BJ (cell line): ENCODE measurements at regions of chr17 and their contacts with region 1.

Region 1: GRCh38 chr17:36629252-36629847 is 28.0 kb downstream of the MRM1 start:
- DNase-seq: no peak
- H3K4me3 ChIP-seq: no peak overlapping the region
- H3K27me3 ChIP-seq: peaks cover 16% of the 10 kb centered on the region
- CTCF ChIP-seq: peak; percentile 97

Region 2: GRCh38 chr17:36601303-36602029 is 27.9 kb before region 1 on chr17 and contains the start of gene MRM1:
- CTCF ChIA-PET with region 1: interaction called, 35 read pairs
- POLR2A ChIA-PET with region 1: no interaction called
- DNase-seq: peak; percentile 72
- H3K4me3 ChIP-seq: peak within 1 kb of the TSS; percentile 92
- H3K27me3 ChIP-seq: no peaks in the 10 kb centered on the region
- CTCF ChIP-seq: peak; percentile 30
- polyA plus RNA-seq, gene MRM1: 3.0 and 3.9 TPM in 2 replicates

Region 3: GRCh38 chr17:36614933-36615332 is 14.4 kb before region 1 on chr17:
- CTCF ChIA-PET with region 1: interaction called, 37 read pairs
- POLR2A ChIA-PET with region 1: no interaction called
- DNase-seq: no peak
- H3K4me3 ChIP-seq: no peak overlapping the region
- H3K27me3 ChIP-seq: 0 out of 2 replicates have a peak, but pooled peaks cover 2% of the 10 kb centered on the region
- CTCF ChIP-seq: no peak

Region 4: DNA sequence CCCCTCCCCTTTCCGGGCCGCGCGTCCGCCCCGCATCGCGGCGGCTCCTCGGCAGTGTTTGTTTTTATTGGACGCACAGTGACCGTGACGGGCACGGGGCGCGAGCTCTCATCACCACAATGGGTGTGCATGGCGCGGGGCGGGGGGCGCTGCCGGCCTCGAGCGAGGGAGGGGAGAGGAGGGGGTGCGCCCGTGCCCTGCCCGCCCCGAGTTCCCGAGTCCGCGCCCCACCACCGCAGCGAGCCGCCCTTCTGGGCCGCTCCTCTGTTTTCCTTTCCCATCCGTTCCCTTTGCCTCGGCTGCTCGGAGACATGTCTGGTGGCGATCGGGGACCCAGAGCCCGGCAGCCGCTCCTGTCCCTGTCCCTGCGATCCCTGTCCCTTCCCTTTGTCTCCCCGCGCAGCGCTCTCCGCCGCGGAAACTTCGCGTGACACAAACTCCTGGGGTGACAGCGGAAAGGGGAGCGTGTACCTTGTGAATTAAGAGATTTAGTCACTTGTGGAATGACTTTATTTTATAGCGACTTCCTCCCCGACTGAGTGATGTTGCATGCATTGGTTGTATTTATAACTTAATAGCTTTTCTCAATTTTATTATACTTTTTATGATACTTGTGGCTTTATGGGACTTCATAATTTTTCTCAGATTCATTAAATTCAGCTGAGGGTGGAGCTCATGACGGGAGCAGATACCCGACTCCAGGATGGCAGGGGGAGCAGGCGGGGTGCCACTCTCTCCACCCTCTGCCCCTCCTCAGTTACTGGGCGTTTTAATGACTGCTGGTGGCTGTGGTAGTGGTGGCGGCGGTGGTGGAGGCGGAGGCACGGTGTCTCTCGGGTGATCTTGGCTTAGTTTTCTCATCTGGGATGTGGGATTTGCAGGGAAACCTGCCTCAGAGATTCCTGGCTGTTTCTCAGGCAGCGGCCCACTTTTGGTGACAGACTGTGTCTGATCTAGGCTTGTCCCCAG is 12.8 kb after region 1 on chr17:
- CTCF ChIA-PET with region 1: interaction called, 10 read pairs
- POLR2A ChIA-PET with region 1: no interaction called
- DNase-seq: no peak
- H3K4me3 ChIP-seq: peak overlapping the region; percentile 27
- H3K27me3 ChIP-seq: peaks cover 52% of the 10 kb centered on the region
- CTCF ChIP-seq: no peak

Region 5: GRCh38 chr17:37047631-37048104 is 418.3 kb after region 1 on chr17:
- CTCF ChIA-PET with region 1: interaction called, 81 read pairs
- POLR2A ChIA-PET with region 1: no interaction called
- DNase-seq: peak; percentile 14
- H3K4me3 ChIP-seq: no peak overlapping the region
- H3K27me3 ChIP-seq: no peaks in the 10 kb centered on the region
- CTCF ChIP-seq: peak; percentile 91

Region 6: DNA sequence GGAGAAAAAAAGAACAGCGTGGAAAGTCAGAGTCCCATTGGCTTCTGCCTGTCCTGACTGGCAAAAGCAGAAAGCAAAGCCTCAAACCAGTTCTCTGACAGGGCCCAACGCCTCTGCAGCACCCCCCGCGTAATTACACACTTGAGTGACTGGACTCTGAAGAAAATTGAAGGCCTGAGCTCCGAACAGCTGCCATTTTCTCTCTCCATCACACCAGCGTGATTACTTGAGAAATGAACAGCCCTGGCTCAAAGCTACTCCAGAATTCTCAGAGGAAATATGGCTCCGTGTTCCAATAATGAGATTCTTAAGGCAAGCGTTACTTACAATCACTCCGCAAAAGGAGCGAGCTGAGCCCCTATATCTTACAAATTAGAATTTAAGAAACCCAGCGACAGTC is 603.7 kb after region 1 on chr17:
- CTCF ChIA-PET with region 1: interaction called, 10 read pairs
- POLR2A ChIA-PET with region 1: no interaction called
- DNase-seq: no peak
- H3K4me3 ChIP-seq: no peak overlapping the region
- H3K27me3 ChIP-seq: no peaks in the 10 kb centered on the region
- CTCF ChIP-seq: no peak

Region 7: GRCh38 chr17:37239690-37240334 is 610.5 kb after region 1 on chr17:
- CTCF ChIA-PET with region 1: interaction called, 39 read pairs
- POLR2A ChIA-PET with region 1: no interaction called
- DNase-seq: no peak
- H3K4me3 ChIP-seq: no peak overlapping the region
- H3K27me3 ChIP-seq: no peaks in the 10 kb centered on the region
- CTCF ChIP-seq: peak; percentile 73